ENCODE measurements at regions of chr2 and their contacts with region 1.

Region 1: DNA sequence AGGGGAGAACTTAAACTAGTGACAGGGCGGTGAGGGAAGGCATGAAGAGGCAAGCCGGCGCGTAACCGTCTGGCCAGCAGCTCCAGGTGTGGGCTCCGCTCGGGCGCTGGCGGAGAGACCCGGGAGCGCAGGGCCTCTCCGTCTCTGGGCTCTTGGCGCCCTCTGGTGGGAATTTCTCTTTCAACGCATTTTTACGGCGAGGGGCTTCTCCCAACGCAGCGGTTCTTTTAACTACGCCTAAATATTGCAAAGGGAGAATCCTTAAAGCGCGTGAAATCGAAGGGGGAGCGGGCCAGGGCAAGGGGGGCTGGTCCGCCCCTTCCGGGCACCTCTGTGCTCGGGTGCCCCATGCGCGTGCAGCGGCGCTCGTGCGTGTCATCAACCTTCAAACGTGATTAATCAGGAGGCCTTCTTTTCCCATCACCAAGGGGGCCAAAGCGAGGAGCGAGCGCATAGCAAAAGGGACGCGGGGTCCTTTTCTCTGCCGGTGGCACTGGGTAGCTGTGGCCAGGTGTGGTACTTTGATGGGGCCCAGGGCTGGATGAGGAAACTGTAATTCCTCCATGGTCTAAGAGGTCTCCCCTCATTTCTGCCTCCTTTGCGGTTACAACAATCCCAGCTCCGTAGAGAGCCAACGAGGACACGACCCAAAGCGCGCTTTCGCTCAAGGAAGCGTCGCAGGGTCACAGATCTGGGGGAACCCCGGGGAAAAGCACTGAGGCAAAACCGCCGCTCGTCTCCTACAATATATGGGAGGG is 762 bp upstream of the GAD1 start:
- DNase-seq: peak; percentile 65
- H3K4me3 ChIP-seq: peak overlapping the region in 3 of 4 donors; percentile 23 to 53 (median 28)
- H3K27ac ChIP-seq: no peak overlapping the region
- H3K4me1 ChIP-seq: peaks cover 23 to 54% (median 46%) of the 10 kb centered on the region in 4 donors
- H3K27me3 ChIP-seq: peaks cover 81% of the 10 kb centered on the region
- CTCF ChIP-seq: peak; percentile 73 to 85 (median 80)
- EP300 ChIP-seq: no peak
- POLR2A ChIP-seq: no peak

Region 2: GRCh38 chr2:170235860-170236679 is 579.9 kb before region 1 on chr2:
- in situ Hi-C with region 1: loop called in 1 of 4 experiments (anchors 10 kb)
- intact Hi-C with region 1: no loop called
- DNase-seq: no peak
- H3K4me3 ChIP-seq: no peak overlapping the region
- H3K27ac ChIP-seq: no peak overlapping the region
- H3K4me1 ChIP-seq: no peaks in the 10 kb centered on the region
- H3K27me3 ChIP-seq: peaks cover 23% of the 10 kb centered on the region
- CTCF ChIP-seq: peak; percentile 40 to 54 (median 51)
- EP300 ChIP-seq: no peak
- POLR2A ChIP-seq: no peak

Region 3: DNA sequence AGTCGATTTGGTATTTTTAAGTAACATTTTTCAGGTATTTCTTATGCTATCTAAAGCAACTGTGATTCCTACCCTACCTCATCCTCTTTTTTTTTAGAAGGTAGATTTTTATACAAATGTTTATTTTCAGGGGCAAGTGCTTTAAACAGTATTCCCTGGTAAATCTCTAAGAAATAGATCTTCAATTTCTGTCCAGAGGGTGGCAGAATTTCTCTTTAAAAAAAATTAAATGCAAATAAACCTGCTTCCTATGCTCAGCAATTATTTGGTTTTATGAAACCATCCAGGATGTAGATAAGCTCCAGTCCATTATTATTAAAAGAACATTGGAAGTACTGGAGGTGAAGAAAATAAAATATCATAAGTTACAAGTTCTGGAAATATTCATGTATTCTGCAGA is 446.0 kb before region 1 on chr2:
- in situ Hi-C with region 1: no loop called
- intact Hi-C with region 1: loop called (anchors 2 kb)
- DNase-seq: no peak
- H3K4me3 ChIP-seq: no peak overlapping the region
- H3K27ac ChIP-seq: no peak overlapping the region
- H3K4me1 ChIP-seq: no peaks in the 10 kb centered on the region
- H3K27me3 ChIP-seq: peaks cover 66% of the 10 kb centered on the region
- CTCF ChIP-seq: peak; percentile 8 to 35 (median 26)
- EP300 ChIP-seq: no peak
- POLR2A ChIP-seq: no peak

Region 4: DNA sequence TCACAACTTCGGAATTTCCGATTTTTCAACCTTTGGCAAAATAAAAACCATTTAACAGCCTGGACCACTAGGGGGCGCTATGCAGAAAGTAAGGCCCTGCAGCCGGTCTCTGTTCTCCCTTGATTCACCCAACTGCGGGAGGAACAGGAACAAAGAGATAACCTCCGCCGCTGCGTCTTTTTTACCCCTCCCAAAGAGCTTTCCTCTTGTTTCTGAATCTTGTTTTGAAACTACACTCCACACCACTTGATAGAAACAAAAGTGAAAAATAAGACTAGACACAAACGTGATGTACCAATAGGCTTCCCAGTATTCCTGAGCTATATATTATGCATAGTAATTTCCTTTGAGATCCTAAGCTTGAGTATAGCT is 406.8 kb before region 1 on chr2:
- in situ Hi-C with region 1: loop called (anchors 10 to 25 kb)
- intact Hi-C with region 1: loop called (anchors 2 kb)
- DNase-seq: peak; percentile 78
- H3K4me3 ChIP-seq: peak overlapping the region in 1 of 4 donors; percentile 6
- H3K27ac ChIP-seq: no peak overlapping the region
- H3K4me1 ChIP-seq: peaks cover 0 to 15% (median 7%) of the 10 kb centered on the region in 4 donors
- H3K27me3 ChIP-seq: peaks cover 15% of the 10 kb centered on the region
- CTCF ChIP-seq: peak; percentile 87 to 90 (median 88)
- EP300 ChIP-seq: no peak
- POLR2A ChIP-seq: no peak

Region 5: DNA sequence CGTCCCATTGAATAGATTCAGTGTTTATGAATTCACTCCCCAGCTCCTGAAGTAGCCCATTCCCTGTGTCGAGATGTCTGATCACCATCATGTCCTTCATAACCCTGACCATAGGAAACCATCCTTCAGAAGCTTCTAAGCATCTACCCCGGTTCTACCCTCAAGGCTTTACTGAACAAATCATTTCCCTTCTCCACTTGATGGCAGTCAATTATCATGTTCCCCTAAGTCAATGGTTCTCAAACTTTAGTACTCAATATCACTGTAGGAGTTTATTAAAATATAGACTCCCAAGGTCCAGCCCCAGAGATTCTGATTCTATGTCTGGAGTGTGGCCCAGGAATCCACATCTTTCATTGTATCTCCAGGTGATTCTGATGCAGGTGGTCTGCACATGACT is 329.2 kb before region 1 on chr2:
- in situ Hi-C with region 1: no loop called
- intact Hi-C with region 1: loop called (anchors 10 kb)
- DNase-seq: no peak
- H3K4me3 ChIP-seq: no peak overlapping the region
- H3K27ac ChIP-seq: no peak overlapping the region
- H3K4me1 ChIP-seq: peaks cover 0 to 6% (median 3%) of the 10 kb centered on the region in 4 donors
- H3K27me3 ChIP-seq: no peaks in the 10 kb centered on the region
- CTCF ChIP-seq: no peak
- EP300 ChIP-seq: no peak
- POLR2A ChIP-seq: no peak

Region 6: DNA sequence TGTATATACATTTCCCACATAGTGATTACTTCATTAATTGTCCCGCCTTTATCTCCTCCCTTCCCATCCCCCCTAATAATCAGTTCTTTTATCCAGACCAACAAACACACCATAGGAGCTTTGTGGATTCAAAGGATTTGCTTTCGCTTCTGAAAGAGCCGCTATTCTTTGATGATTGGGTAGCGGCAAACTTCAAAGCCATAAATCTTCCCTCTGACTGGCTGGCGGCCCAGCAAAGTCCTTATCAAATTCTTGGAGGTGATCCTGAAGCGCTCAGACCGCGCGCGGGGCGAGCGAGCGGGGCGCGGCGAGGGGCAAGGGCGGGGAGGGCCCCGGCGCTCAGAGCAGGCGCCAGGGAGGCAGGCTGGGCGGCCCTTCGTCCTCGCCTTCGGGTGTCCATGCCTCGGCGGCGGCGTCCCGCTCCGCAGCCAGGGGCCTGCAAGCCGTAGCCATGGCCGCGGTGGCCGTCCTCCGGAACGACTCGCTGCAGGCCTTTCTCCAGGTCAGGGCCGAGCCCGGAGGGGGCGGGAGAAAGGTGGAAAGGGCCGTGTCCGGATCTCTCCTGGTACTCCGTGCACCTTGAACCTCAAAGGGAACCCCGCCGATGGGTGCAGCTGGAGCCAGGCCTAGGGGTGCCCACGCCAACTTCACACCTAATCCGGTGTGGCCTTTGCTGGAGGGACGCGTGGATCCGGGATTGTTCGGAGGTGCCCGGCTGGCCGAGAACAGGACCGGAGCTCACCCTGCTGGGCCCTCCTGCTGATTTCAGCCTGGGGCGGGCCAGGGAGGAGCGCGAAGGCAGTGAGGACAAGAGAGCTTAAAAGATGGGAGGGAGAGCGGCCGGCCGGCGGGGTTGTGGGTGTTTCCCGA is 100.6 kb before region 1 on chr2 and contains the start of gene SP5:
- in situ Hi-C with region 1: loop called in 1 of 4 experiments (anchors 25 kb)
- intact Hi-C with region 1: no loop called
- DNase-seq: peak; percentile 44
- H3K4me3 ChIP-seq: peak within 1 kb of the TSS; percentile 36 to 62 (median 42)
- H3K27ac ChIP-seq: peak within 1 kb of the TSS; percentile 49 to 72 (median 58)
- H3K4me1 ChIP-seq: peaks cover 7 to 49% (median 33%) of the 10 kb centered on the region in 4 donors
- H3K27me3 ChIP-seq: peaks cover 96% of the 10 kb centered on the region
- CTCF ChIP-seq: no peak
- EP300 ChIP-seq: no peak
- POLR2A ChIP-seq: no peak
- total RNA-seq, gene SP5: 0.41 to 2.2 TPM in 2 of 4 donors, not detected in the others